Thyroid gland (tissue), 4 donors: ENCODE measurements at regions of chr10 and their contacts with region 1.

Region 1: GRCh38 chr10:7410862-7411670 is at the start of gene SFMBT2:
- DNase-seq: peak; percentile 74 to 76
- H3K4me3 ChIP-seq: peak within 1 kb of the TSS; percentile 19 to 60 (median 45)
- H3K27ac ChIP-seq: peak within 1 kb of the TSS; percentile 60 to 88 (median 68)
- H3K4me1 ChIP-seq: peaks cover 22 to 25% of the 10 kb centered on the region in 2 donors
- H3K27me3 ChIP-seq: no peaks in the 10 kb centered on the region
- CTCF ChIP-seq: peak in 1 of 6 experiments; percentile 17
- POLR2A ChIP-seq: peak in 1 of 2 donors; percentile 44
- total RNA-seq, gene SFMBT2: 7.1 to 13.2 (median 9.0) TPM

Region 2: GRCh38 chr10:6918305-6918704 is 492.8 kb before region 1 on chr10:
- intact Hi-C with region 1: loop called (anchors 10 kb)
- DNase-seq: peak; percentile 40 to 60
- H3K4me3 ChIP-seq: no peak overlapping the region
- H3K27ac ChIP-seq: no peak overlapping the region
- H3K4me1 ChIP-seq: no peaks in the 10 kb centered on the region
- H3K27me3 ChIP-seq: no peaks in the 10 kb centered on the region
- CTCF ChIP-seq: peak in 3 of 6 experiments; percentile 25 to 55 (median 44)
- POLR2A ChIP-seq: no peak

Region 3: DNA sequence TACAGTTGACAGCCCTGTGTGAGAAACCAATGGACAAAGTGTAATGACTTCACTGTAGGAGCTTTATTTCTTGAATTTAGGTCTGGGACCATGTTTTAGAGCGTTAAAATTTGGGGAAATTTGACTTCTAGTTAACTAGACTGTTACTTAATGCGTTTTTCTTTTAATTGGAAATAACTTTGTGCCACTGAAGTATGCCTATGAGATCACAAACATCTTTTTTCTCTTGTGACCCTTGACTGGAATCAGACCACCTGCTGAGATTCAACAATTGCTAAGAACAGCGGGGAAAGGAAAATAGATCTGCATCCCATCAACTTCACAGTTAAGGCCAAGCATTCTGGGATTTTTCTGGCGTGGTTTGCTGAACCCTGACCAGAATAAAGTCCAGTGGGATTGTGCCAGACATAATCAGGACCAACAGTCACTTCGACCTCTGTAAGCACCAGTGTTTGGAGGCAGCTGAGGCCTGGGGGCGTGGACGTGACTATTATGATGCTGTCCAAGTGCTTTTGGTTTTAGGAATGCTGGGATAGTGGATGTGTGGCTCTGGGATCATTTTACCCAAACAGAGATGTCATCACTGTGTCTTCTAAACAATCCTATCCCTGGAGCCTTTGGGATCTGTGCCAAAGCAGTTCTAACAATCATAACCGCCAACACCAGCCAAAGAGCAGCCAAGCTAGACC is 457.8 kb before region 1 on chr10:
- intact Hi-C with region 1: no loop called
- DNase-seq: no peak
- H3K4me3 ChIP-seq: no peak overlapping the region
- H3K27ac ChIP-seq: no peak overlapping the region
- H3K4me1 ChIP-seq: no peaks in the 10 kb centered on the region
- H3K27me3 ChIP-seq: no peaks in the 10 kb centered on the region
- CTCF ChIP-seq: no peak
- POLR2A ChIP-seq: no peak

Region 4: GRCh38 chr10:7260412-7260900 is 150.6 kb before region 1 on chr10:
- intact Hi-C with region 1: loop called (anchors 5 kb)
- DNase-seq: peak; percentile 52 to 53
- H3K4me3 ChIP-seq: no peak overlapping the region
- H3K27ac ChIP-seq: no peak overlapping the region
- H3K4me1 ChIP-seq: peaks cover 4 to 5% of the 10 kb centered on the region in 2 donors
- H3K27me3 ChIP-seq: no peaks in the 10 kb centered on the region
- CTCF ChIP-seq: peak; percentile 26 to 81 (median 68)
- POLR2A ChIP-seq: no peak

Region 5: DNA sequence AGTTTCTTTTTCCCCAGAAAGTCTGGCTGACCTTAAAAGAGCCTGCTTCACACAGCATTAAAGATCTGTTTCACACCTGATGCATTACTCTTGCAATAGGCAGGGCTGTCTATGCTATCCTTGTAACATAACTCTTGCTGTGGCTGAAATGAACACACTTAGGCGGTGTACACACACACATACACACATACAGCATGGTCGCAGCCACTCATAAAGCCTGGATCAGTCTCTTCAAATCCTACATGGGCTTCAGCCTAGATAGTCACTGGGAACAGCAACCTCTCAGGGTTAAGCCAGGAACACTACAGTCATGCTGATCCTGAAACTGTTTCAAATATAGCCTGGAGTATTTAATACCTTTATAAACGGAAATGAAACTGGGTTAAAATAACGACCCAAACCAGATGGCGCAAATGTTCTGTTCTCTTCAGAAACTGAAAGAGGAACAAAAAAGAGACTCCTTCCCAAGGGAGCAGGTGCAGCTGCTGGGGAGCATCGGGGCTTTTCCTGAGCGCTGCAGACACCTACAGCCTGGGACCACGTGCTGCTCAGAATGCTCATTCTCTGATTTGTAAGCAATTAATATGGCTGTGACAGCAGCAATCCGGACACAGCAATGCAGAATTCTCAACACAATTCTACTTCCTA is 60.8 kb after region 1 on chr10:
- intact Hi-C with region 1: no loop called
- DNase-seq: no peak
- H3K4me3 ChIP-seq: no peak overlapping the region
- H3K27ac ChIP-seq: no peak overlapping the region
- H3K4me1 ChIP-seq: peaks cover 10 to 11% of the 10 kb centered on the region in 2 donors
- H3K27me3 ChIP-seq: no peaks in the 10 kb centered on the region
- CTCF ChIP-seq: no peak
- POLR2A ChIP-seq: no peak